ENCODE measurements at regions of chr3 and their contacts with region 1.

Region 1: GRCh38 chr3:192122832-192123594 is 604.3 kb downstream of the FGF12 start:
- DNase-seq: no peak
- ATAC-seq: peak; percentile 83
- H3K4me3 Mint-ChIP-seq: peak overlapping the region; percentile 71
- H3K27ac Mint-ChIP-seq: peak overlapping the region; percentile 87
- H3K4me1 Mint-ChIP-seq: peaks cover 14% of the 10 kb centered on the region
- H3K27me3 Mint-ChIP-seq: no peaks in the 10 kb centered on the region
- CTCF ChIP-seq: no peak

Region 2: DNA sequence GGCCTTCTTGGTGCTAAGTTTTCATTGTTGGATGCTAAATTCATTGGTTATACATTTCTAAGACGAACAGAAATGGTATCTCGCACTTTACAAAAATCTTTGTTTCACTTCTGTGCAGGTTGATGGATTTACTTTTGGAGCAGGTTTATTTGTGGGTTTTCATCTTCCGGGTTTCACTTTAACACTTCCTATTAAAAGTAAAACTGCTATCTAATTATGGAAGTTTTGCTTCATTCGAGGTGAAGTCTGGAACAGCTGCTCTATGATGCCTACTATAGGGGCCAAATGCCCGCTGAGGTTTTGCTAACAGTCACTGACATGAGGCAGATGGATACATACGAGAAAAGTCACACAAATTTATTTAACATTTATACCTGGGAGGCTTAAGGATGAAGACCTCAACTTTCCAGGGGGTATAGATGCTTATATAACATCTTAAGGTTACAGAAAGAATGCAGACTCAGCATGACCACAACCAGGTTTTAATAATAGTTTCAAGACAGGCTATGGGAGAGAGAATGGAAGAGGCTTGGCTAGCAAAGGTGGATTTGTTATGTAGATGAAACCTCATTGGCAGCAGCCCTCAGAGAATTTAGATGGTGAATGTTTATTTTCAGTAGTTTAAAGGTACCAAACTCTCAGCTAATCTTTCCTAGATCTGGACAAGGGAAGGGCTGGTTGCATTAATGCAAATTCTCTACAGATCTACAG is 869.8 kb before region 1 on chr3:
- CTCF ChIA-PET with region 1: no interaction called
- POLR2A ChIA-PET with region 1: no interaction called
- intact Hi-C with region 1: loop called (anchors 10 kb)
- DNase-seq: no peak
- ATAC-seq: peak; percentile 49
- H3K4me3 Mint-ChIP-seq: peak overlapping the region; percentile 71
- H3K27ac Mint-ChIP-seq: peak overlapping the region; percentile 89
- H3K4me1 Mint-ChIP-seq: peaks cover 64% of the 10 kb centered on the region
- H3K27me3 Mint-ChIP-seq: no peaks in the 10 kb centered on the region
- CTCF ChIP-seq: no peak

Region 3: GRCh38 chr3:192042116-192042515 is 80.9 kb before region 1 on chr3:
- CTCF ChIA-PET with region 1: no interaction called
- POLR2A ChIA-PET with region 1: interaction called, 3 read pairs
- intact Hi-C with region 1: loop called (anchors 2 kb)
- DNase-seq: no peak
- ATAC-seq: peak; percentile 73
- H3K4me3 Mint-ChIP-seq: no peak overlapping the region
- H3K27ac Mint-ChIP-seq: peak overlapping the region; percentile 36
- H3K4me1 Mint-ChIP-seq: peaks cover 16% of the 10 kb centered on the region
- H3K27me3 Mint-ChIP-seq: no peaks in the 10 kb centered on the region
- CTCF ChIP-seq: no peak

Region 4: DNA sequence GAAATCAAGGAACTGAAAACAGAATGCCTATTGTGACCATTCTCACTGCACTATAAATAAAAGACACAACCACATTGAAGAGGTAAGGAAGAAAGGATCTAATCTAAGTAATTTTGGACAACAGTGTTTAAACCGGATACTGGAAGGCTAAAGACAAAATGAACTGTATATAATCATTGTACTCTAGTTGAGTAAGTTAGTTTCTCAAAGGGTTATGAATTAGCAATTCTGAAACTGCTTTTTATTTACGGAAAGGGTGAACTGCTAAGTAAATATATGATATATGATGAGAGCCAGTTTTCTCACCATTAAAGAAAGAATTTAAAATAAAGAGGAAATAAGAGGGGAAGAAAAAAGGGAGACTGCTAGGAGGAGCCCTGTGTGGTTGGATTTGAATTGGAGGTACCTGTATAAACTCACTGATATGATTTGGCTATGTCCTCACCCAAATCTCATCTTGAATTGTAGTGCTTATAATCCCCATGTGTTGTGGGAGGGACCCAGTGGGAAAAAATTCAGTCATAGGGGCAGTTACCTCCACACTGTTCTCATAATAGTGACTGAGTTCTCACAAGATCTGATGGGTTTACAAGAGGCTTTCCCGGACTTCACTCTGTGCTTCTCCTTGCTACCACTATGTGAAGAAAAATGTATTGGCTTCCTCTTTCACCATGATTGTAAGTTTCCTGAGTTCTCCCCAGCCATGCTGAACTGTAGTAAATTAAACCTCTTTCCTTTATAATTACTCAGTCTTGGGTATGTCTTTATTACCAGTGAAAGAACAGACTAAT is 54.4 kb before region 1 on chr3:
- CTCF ChIA-PET with region 1: no interaction called
- POLR2A ChIA-PET with region 1: no interaction called
- intact Hi-C with region 1: loop called (anchors 2 kb)
- DNase-seq: no peak
- ATAC-seq: peak; percentile 57
- H3K4me3 Mint-ChIP-seq: no peak overlapping the region
- H3K27ac Mint-ChIP-seq: peak overlapping the region; percentile 26
- H3K4me1 Mint-ChIP-seq: peaks cover 22% of the 10 kb centered on the region
- H3K27me3 Mint-ChIP-seq: no peaks in the 10 kb centered on the region
- CTCF ChIP-seq: no peak

Region 5: DNA sequence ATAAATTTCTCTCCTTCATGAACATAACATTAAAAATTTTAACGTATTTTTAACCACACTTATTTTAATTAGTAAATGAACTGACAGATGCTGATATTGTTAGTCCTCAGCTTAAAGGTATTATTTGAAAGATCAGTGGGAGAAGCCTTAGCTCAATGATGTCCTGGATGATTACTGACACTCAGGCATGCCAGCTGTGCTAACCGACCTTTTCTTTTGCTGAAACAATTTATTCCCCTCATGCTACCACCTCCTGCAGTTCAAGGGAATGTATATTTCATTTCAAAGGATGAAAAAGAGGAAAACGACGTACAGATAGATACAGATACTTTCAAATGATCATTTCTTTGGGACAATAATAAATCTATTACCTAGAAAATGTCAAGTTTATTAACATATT is 16.5 kb before region 1 on chr3:
- CTCF ChIA-PET with region 1: no interaction called
- POLR2A ChIA-PET with region 1: no interaction called
- intact Hi-C with region 1: no loop called
- DNase-seq: no peak
- ATAC-seq: no peak
- H3K4me3 Mint-ChIP-seq: no peak overlapping the region
- H3K27ac Mint-ChIP-seq: no peak overlapping the region
- H3K4me1 Mint-ChIP-seq: no peaks in the 10 kb centered on the region
- H3K27me3 Mint-ChIP-seq: no peaks in the 10 kb centered on the region
- CTCF ChIP-seq: no peak

Measured in activated B cell treated with CpG ODN at 0.5 μM for 24 hours (primary cell).